H1 (cell line): ENCODE measurements at regions of chr6 and their contacts with region 1.

Region 1: GRCh38 chr6:27864906-27865849 is 47.0 kb downstream of the OR2B2 start:
- DNase-seq: peak in 1 of 2 experiments; percentile 86
- H3K4me3 ChIP-seq: peak overlapping the region; percentile 61 to 86 (median 79)
- H3K27ac ChIP-seq: peak overlapping the region; percentile 90
- H3K4me1 ChIP-seq: peaks cover 0 to 5% (median 1%) of the 10 kb centered on the region in 4 experiments; a peak in 2 of 7 replicates
- H3K27me3 ChIP-seq: no peaks in the 10 kb centered on the region
- CTCF ChIP-seq: no peak
- EP300 ChIP-seq: no peak
- POLR2A ChIP-seq: peak; percentile 93 to 97
- RAD21 ChIP-seq: no peak; a peak in 1 of 4 replicates

Region 2: DNA sequence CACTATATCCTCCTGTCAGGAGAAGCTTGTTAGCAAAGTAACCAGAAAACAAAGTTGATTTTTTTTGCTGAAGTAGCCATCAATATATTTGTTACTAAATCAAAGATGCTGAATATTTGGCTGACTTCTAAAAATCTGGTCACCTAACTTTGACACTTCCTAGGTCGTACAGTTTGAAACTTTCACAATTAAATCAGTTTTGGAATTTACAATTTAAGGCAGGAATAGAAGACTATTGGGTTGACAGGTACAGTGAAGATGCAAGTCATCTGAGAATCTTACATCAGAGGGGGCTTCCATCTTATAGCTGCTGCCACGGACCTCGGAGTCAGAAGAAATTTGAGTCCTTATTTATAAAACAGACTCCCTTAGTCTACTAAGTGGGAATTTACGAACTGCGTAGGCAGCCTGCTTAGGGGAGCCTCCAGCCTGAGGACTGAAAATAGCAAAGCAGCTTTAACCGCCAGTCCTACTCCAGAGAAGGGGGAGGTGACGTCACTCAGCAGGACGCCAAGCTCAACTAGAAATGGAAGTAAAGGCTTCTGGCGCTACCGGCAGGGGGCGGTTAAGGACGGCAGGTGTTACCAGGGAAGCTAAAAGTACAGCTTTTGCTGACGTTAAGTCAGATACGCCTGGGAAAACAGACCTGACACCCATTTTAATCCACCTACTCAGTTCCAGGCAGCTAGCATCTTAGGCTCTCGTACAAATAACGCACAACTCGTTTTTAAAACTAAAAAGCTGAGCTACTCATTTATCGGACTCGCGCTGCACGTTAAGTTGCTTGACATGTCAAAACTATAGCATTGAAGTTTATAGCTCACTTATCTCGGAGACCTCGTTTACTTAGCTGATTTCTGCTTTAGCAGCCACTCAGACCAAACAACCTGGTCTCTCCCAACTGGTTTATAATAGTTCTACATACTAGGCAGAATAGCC is 1839.0 kb before region 1 on chr6:
- CTCF ChIA-PET with region 1: no interaction called
- POLR2A ChIA-PET with region 1: interaction called, 57 read pairs
- DNase-seq: peak; percentile 90 to 93
- H3K4me3 ChIP-seq: peak overlapping the region; percentile 75 to 89 (median 82)
- H3K27ac ChIP-seq: peak overlapping the region; percentile 80
- H3K4me1 ChIP-seq: peaks cover 3 to 26% (median 10%) of the 10 kb centered on the region in 4 experiments; a peak in 5 of 7 replicates
- H3K27me3 ChIP-seq: no peaks in the 10 kb centered on the region
- CTCF ChIP-seq: peak; percentile 63 to 93 (median 77)
- EP300 ChIP-seq: peak in 1 of 2 experiments; percentile 43; a peak in 1 of 3 replicates
- POLR2A ChIP-seq: peak; percentile 85 to 91; a peak in 2 of 3 replicates
- RAD21 ChIP-seq: peak; percentile 45 to 47

Region 3: DNA sequence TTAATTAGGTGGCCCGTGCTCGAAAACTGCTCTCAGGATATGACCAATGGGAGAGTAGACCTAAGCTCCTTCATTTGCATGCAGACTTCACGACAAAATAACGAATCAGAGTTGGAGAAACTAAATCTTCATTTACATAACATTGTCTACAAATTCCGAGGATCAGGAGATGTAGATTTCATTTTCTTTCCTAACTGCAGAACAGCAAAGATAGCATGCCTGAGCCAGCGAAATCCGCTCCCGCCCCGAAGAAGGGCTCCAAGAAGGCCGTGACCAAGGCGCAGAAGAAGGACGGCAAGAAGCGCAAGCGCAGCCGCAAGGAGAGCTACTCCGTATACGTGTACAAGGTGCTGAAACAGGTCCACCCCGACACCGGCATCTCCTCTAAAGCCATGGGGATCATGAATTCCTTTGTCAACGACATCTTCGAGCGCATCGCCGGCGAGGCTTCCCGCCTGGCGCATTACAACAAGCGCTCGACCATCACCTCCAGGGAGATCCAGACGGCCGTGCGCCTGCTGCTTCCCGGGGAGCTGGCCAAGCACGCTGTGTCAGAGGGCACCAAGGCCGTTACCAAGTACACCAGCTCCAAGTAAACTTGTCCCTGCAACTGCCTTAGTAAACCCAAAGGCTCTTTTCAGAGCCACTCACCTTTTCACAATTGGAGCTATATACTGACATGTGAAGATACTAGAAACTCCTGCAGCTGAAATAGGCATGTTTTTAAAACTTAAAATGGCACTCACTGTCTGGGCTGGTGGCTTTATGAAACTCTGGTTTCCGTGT is 1681.4 kb before region 1 on chr6:
- CTCF ChIA-PET with region 1: no interaction called
- POLR2A ChIA-PET with region 1: interaction called, 24 read pairs
- DNase-seq: peak in 1 of 2 experiments; percentile 82
- H3K4me3 ChIP-seq: peak overlapping the region; percentile 45 to 73 (median 70)
- H3K27ac ChIP-seq: peak overlapping the region; percentile 97
- H3K4me1 ChIP-seq: peaks cover 0 to 17% (median 8%) of the 10 kb centered on the region in 4 experiments; a peak in 5 of 7 replicates
- H3K27me3 ChIP-seq: no peaks in the 10 kb centered on the region
- CTCF ChIP-seq: no peak
- EP300 ChIP-seq: no peak
- POLR2A ChIP-seq: peak; percentile 94 to 99
- RAD21 ChIP-seq: no peak

Region 4: DNA sequence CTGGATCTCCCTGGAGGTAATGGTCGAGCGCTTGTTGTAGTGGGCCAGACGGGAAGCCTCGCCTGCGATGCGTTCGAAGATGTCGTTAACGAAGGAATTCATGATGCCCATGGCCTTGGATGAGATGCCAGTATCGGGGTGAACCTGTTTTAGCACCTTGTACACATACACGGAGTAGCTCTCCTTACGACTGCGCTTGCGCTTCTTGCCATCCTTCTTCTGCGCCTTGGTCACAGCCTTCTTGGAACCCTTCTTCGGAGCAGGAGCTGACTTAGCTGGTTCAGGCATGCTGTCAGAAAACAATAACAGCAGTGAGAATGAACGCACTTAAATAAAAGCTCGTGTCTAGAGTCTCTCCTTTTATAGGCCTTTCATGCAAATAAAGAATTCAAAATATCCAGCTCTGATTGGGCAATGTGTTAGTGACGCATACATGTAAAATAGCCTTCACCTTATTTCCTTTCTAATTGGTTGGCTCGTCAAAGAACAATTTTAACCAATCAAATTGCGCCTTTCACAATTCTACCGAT is 1648.8 kb before region 1 on chr6:
- CTCF ChIA-PET with region 1: no interaction called
- POLR2A ChIA-PET with region 1: interaction called, 119 read pairs
- DNase-seq: no peak
- H3K4me3 ChIP-seq: peak overlapping the region; percentile 87 to 98 (median 90)
- H3K27ac ChIP-seq: peak overlapping the region; percentile 97
- H3K4me1 ChIP-seq: peaks cover 0 to 8% (median 1%) of the 10 kb centered on the region in 4 experiments; a peak in 4 of 7 replicates
- H3K27me3 ChIP-seq: no peaks in the 10 kb centered on the region
- CTCF ChIP-seq: no peak
- EP300 ChIP-seq: no peak
- POLR2A ChIP-seq: peak; percentile 96 to 98
- RAD21 ChIP-seq: no peak

Region 5: GRCh38 chr6:26249957-26250697 is 1615.1 kb before region 1 on chr6:
- CTCF ChIA-PET with region 1: no interaction called
- POLR2A ChIA-PET with region 1: interaction called, 26 read pairs
- DNase-seq: peak in 1 of 2 experiments; percentile 73
- H3K4me3 ChIP-seq: peak overlapping the region; percentile 75 to 98 (median 90)
- H3K27ac ChIP-seq: peak overlapping the region; percentile 97
- H3K4me1 ChIP-seq: peaks cover 0 to 5% (median 4%) of the 10 kb centered on the region in 4 experiments; a peak in 5 of 7 replicates
- H3K27me3 ChIP-seq: no peaks in the 10 kb centered on the region
- CTCF ChIP-seq: peak in 2 of 3 experiments; percentile 23 to 34; a peak in 2 of 4 replicates
- EP300 ChIP-seq: 0 out of 3 replicates have a peak, but pooled peaks of 1 of the 2 experiments have one; percentile 34
- POLR2A ChIP-seq: peak; percentile 98
- RAD21 ChIP-seq: no peak

Region 6: DNA sequence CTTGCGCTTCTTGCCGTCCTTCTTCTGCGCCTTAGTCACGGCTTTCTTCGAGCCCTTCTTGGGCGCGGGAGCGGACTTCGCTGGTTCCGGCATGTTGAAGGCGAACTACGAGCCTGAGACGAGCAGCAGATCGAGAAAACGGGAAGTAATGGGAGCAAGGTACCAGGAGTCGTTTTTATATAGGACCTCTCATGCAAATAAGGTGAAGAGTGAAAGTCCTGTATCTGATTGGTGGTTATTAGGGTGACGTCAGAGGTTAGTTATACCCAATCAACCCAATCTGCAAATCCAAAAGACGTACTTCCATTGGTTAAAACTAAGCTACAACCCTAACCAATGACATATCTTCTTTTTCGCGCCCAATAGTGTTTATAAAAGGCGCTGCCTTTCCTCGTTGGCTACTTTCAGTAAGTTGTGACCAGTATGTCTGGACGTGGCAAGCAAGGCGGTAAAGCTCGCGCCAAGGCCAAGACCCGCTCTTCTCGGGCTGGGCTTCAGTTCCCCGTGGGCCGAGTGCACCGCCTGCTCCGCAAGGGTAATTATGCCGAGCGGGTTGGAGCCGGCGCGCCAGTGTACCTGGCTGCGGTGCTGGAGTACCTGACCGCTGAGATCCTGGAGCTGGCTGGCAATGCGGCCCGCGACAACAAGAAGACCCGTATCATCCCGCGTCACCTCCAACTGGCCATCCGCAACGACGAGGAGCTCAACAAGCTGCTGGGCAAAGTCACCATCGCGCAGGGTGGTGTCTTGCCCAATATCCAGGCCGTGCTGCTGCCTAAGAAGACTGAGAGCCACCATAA is 718.3 kb before region 1 on chr6:
- CTCF ChIA-PET with region 1: no interaction called
- POLR2A ChIA-PET with region 1: interaction called, 211 read pairs
- DNase-seq: peak; percentile 89 to 93
- H3K4me3 ChIP-seq: peak overlapping the region; percentile 60 to 86 (median 76)
- H3K27ac ChIP-seq: peak overlapping the region; percentile 98
- H3K4me1 ChIP-seq: peaks cover 0 to 11% (median 1%) of the 10 kb centered on the region in 4 experiments; a peak in 4 of 7 replicates
- H3K27me3 ChIP-seq: no peaks in the 10 kb centered on the region
- CTCF ChIP-seq: no peak
- EP300 ChIP-seq: 0 out of 3 replicates have a peak, but pooled peaks of 1 of the 2 experiments have one; percentile 16
- POLR2A ChIP-seq: peak; percentile 98 to 99
- RAD21 ChIP-seq: no peak

Region 7: GRCh38 chr6:27851440-27851839 is 13.7 kb before region 1 on chr6:
- CTCF ChIA-PET with region 1: no interaction called
- POLR2A ChIA-PET with region 1: interaction called, 3,039 read pairs
- DNase-seq: no peak
- H3K4me3 ChIP-seq: no peak overlapping the region
- H3K27ac ChIP-seq: no peak overlapping the region
- H3K4me1 ChIP-seq: peaks cover 0 to 6% (median 2%) of the 10 kb centered on the region in 4 experiments; a peak in 2 of 7 replicates
- H3K27me3 ChIP-seq: no peaks in the 10 kb centered on the region
- CTCF ChIP-seq: no peak
- EP300 ChIP-seq: no peak
- POLR2A ChIP-seq: no peak
- RAD21 ChIP-seq: no peak